Pancreas (tissue), 10 donors: ENCODE measurements at regions of chr20 and their contacts with region 1.

Region 1: DNA sequence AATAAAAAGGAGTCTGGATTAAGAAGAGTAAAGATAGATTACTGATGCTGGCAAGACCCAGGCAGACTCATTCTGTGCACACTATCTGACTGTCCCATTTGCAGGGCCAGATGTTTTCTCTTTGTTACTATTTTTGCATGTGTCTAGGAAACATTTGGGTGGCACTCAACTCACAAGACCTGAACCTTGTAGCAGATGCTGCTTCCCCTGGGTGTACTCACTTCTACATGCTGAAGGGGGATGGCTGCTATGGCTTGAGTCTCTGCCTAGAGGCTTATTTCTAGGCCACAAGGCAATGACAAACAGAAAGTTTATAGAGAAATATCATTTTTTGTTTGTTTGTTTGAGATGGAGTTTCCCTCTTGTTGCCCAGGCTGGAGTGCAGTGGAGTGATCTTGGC is 351.4 kb downstream of the FOXA2 start:
- DNase-seq: no peak
- ATAC-seq: no peak
- H3K4me3 ChIP-seq: no peak overlapping the region
- H3K27ac ChIP-seq: no peak overlapping the region
- H3K4me1 ChIP-seq: no peaks in the 10 kb centered on the region
- H3K27me3 ChIP-seq: no peaks in the 10 kb centered on the region
- CTCF ChIP-seq: no peak

Region 2: GRCh38 chr20:21981597-21982344 is 251.2 kb before region 1 on chr20:
- intact Hi-C with region 1: no loop called
- DNase-seq: no peak
- ATAC-seq: peak in 3 of 4 donors; percentile 36 to 67 (median 46)
- H3K4me3 ChIP-seq: no peak overlapping the region
- H3K27ac ChIP-seq: no peak overlapping the region
- H3K4me1 ChIP-seq: no peaks in the 10 kb centered on the region
- H3K27me3 ChIP-seq: no peaks in the 10 kb centered on the region
- CTCF ChIP-seq: no peak

Region 3: GRCh38 chr20:22296073-22296472 is 63.1 kb after region 1 on chr20:
- intact Hi-C with region 1: loop called in 1 of 3 experiments (anchors 10 kb)
- DNase-seq: no peak
- ATAC-seq: no peak
- H3K4me3 ChIP-seq: no peak overlapping the region
- H3K27ac ChIP-seq: no peak overlapping the region
- H3K4me1 ChIP-seq: no peaks in the 10 kb centered on the region
- H3K27me3 ChIP-seq: no peaks in the 10 kb centered on the region
- CTCF ChIP-seq: no peak